ENCODE measurements at regions of chr3 and their contacts with region 1.

Region 1: DNA sequence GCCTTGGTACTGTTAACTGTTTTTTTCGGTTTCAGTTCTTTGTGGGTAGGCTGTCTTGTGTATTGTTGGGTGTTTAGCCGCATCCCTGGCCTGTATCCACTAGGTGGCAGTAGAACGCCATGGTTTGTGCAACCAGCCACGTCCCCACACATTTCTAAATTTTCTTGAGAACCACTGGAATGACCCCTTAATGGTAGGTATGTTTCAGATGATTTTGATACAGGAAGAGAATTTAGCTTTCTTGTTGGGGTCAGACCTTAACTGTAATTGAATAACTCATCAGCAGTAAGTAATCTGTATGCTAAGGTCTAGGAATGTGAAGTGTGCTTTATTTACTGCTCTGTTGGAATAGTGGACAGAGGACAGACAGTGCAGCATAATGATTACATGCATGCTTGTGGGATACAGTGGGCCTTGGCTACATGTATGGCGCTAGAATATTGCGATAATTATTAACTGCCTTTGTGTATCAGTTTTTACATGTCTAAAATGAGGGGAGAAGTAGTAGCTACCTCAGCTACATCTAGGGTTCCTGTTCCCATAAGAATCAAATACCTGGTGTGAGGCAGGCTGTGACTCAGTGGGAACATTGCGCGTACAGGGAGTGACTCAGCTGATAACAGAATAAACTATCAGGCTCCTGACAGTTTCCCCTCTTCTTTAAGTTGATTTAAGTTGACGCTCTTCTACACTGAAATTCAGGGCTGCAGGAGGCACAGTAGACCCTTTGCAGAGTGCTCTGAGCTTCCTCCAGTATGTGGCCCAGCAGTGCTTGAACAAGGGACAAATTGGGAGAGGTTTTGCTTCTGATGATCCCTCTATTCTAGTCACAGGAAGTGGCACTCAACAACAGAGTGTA is 25.0 kb upstream of the GPR171 start:
- DNase-seq: peak; percentile 85
- H3K4me3 Mint-ChIP-seq: peak overlapping the region; percentile 31
- H3K27ac Mint-ChIP-seq: peak overlapping the region; percentile 7
- H3K4me1 Mint-ChIP-seq: peaks cover 23% of the 10 kb centered on the region
- H3K27me3 Mint-ChIP-seq: no peaks in the 10 kb centered on the region
- CTCF ChIP-seq: peak; percentile 94

Region 2: DNA sequence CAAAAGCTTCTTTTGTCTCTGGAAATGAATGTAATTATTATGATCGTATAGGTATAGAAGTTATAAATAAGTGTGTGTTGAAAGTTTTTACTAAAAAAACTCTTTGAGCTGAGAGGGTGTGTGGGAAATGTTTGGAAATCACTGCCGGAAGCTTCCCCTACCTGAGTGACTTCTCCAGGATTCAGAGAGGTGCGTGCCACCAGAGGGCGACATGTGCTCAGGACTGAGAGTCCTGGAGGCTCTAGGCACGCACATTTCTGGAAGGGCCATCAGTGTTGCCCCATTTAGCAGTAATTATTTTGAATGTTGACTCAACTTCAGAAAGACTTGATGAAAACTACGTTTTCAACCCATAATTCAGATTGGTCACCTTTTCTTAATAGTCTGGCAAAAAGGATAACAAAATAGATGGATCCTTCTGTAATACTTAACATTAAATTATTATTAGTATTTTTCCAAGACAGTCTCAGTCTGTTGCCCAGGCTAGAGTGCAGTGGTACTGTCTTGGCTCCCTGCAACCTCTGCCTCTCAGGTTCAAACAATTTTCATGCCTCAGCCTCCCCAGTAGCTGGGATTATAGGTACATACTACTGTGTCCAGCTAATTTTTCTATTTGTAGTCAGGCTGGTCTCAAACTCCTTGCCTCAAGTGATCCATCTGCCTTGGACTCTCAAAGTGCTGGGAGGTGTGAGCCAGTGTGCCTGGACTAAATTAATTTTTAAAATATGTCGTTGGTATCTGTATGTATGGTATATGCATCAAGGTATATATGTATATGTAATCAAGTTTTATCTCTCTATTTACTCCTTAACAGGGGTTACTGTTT is 59.6 kb before region 1 on chr3:
- CTCF ChIA-PET with region 1: interaction called, 7 read pairs
- intact Hi-C with region 1: loop called (anchors 1 kb)
- DNase-seq: peak; percentile 92
- H3K4me3 Mint-ChIP-seq: no peak overlapping the region
- H3K27ac Mint-ChIP-seq: no peak overlapping the region
- H3K4me1 Mint-ChIP-seq: no peaks in the 10 kb centered on the region
- H3K27me3 Mint-ChIP-seq: no peaks in the 10 kb centered on the region
- CTCF ChIP-seq: peak; percentile 99

Region 3: DNA sequence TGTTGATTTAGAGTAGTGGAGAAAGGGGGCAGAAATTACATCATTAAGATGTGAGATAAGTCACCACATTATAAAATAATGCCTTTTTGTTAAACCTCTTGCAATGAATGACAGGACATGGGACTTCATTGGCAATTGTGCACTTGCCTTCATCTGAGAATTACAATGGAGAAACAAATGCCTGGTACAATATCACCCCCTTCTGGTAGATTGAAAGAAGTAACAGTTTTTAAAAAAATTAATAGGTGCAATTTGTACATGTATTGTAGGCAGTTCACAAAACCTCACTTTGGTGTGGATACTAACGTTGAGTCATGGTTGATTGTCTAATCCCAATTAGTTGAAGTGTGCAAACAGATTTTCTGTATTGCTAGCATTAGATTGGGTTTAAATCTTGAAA is 54.9 kb after region 1 on chr3:
- CTCF ChIA-PET with region 1: interaction called, 4 read pairs
- intact Hi-C with region 1: loop called (anchors 1 kb)
- DNase-seq: no peak
- H3K4me3 Mint-ChIP-seq: no peak overlapping the region
- H3K27ac Mint-ChIP-seq: no peak overlapping the region
- H3K4me1 Mint-ChIP-seq: no peaks in the 10 kb centered on the region
- H3K27me3 Mint-ChIP-seq: no peaks in the 10 kb centered on the region
- CTCF ChIP-seq: peak; percentile 73

Region 4: GRCh38 chr3:151367448-151367847 is 139.4 kb after region 1 on chr3:
- CTCF ChIA-PET with region 1: interaction called, 4 read pairs
- intact Hi-C with region 1: loop called (anchors 5 kb)
- DNase-seq: peak; percentile 17
- H3K4me3 Mint-ChIP-seq: peak overlapping the region; percentile 10
- H3K27ac Mint-ChIP-seq: peak overlapping the region; percentile 27
- H3K4me1 Mint-ChIP-seq: peaks cover 15% of the 10 kb centered on the region
- H3K27me3 Mint-ChIP-seq: no peaks in the 10 kb centered on the region
- CTCF ChIP-seq: no peak

Region 5: GRCh38 chr3:151434151-151434890 is 206.3 kb after region 1 on chr3:
- CTCF ChIA-PET with region 1: no interaction called
- intact Hi-C with region 1: loop called (anchors 5 kb)
- DNase-seq: peak; percentile 41
- H3K4me3 Mint-ChIP-seq: no peak overlapping the region
- H3K27ac Mint-ChIP-seq: peak overlapping the region; percentile 79
- H3K4me1 Mint-ChIP-seq: peaks cover 47% of the 10 kb centered on the region
- H3K27me3 Mint-ChIP-seq: no peaks in the 10 kb centered on the region
- CTCF ChIP-seq: no peak